Heart left ventricle (tissue), 16 donors: ENCODE measurements at regions of chr1 and their contacts with region 1.

Region 1: DNA sequence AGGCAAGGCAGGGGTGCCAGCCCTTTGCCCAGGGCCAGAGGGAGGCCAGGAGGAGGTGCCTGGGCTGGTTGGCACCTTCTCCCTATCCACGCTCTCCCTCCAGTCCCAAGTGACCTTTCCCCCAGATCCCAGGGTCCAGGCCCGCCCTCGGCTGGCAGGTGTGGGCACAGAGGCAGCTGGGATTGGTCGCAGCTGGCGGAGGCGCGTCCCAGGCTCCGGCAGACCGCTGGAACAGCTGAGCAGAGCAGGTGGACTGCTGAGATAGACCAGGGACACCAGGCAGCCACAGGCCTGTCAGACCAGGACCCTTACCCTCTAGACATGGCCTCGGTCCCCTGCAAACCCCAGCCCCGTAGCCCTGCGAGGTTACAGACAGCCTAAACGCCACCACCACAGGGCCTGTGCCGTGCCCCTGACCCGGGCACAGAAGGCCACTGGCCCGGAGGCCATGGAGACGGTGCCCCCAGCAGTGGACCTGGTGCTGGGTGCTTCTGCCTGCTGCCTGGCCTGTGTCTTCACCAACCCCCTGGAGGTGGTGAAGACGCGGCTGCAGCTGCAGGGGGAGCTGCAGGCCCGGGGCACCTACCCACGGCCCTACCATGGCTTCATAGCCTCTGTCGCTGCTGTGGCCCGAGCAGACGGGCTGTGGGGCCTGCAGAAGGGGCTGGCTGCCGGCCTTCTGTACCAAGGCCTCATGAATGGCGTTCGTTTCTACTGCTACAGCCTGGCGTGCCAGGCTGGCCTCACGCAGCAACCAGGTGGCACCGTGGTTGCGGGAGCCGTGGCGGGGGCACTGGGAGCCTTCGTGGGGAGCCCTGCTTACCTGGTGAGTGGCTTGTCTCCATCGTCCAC is at the start of gene SLC25A34:
- DNase-seq: peak; percentile 80 to 93 (median 87)
- ATAC-seq: peak; percentile 82 to 92 (median 88)
- H3K4me3 ChIP-seq: peak within 1 kb of the TSS in 10 of 12 donors; percentile 14 to 47 (median 30)
- H3K27ac ChIP-seq: peak within 1 kb of the TSS; percentile 73 to 96 (median 84)
- H3K4me1 ChIP-seq: peaks cover 0 to 41% (median 17%) of the 10 kb centered on the region in 12 donors
- H3K27me3 ChIP-seq: no peaks in the 10 kb centered on the region
- CTCF ChIP-seq: peak in 1 of 12 donors; percentile 16
- POLR2A ChIP-seq: peak in 1 of 2 donors; percentile 48
- total RNA-seq, gene SLC25A34: 4.8 to 71.2 (median 17.8) TPM

Region 2: DNA sequence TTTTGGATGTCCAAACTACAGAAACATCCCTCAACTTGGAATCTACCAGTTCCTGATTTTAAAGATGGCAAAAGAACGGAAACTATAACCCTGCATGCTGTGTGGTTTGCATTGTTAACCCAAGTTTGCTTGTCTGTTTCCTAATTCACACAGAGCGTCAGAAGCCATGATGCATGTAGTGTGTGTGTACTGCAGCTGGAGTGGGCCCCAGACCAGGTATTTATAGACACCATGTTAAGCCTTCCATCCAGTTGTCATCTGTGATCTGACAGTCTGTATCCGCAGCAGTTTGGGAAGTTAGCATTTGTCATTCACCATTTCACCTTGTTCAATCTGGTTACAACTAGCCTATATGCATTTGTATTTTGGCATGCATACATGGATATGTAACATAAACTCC is 79.8 kb before region 1 on chr1:
- intact Hi-C with region 1: loop called in 2 of 10 experiments (anchors 2 to 5 kb)
- DNase-seq: no peak
- ATAC-seq: peak; percentile 51 to 84 (median 79)
- H3K4me3 ChIP-seq: no peak overlapping the region
- H3K27ac ChIP-seq: peak overlapping the region in 3 of 12 donors; percentile 20 to 54 (median 41)
- H3K4me1 ChIP-seq: peaks cover 0 to 16% (median 3%) of the 10 kb centered on the region in 12 donors
- H3K27me3 ChIP-seq: no peaks in the 10 kb centered on the region
- CTCF ChIP-seq: peak in 3 of 12 donors; percentile 16 to 23 (median 17)
- POLR2A ChIP-seq: no peak

Region 3: DNA sequence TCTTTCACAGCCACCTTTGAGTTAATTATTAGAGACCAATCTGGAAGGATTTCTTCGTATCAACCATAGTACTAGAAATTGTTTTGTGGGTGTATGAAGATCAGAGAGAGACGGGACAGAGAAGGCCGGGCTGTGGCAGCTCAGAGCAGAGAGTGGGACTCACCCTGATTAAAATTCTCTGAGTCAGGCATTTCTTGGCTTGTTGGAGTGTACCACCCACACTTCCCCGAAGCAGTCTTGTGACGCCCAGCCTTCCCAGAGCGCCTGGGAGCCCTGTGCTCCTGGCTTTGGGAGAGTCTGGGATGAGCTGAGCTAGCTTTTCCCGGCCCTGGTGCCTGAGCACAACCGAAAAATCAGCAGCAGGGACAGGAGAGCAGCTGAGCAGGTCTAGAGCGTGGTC is 32.7 kb before region 1 on chr1:
- intact Hi-C with region 1: loop called in 1 of 10 experiments (anchors 5 kb)
- DNase-seq: peak; percentile 77 to 88 (median 81)
- ATAC-seq: peak; percentile 73 to 94 (median 94)
- H3K4me3 ChIP-seq: peak overlapping the region in 7 of 12 donors; percentile 1 to 17 (median 8)
- H3K27ac ChIP-seq: peak overlapping the region; percentile 14 to 96 (median 86)
- H3K4me1 ChIP-seq: peaks cover 7 to 84% (median 56%) of the 10 kb centered on the region in 12 donors
- H3K27me3 ChIP-seq: no peaks in the 10 kb centered on the region
- CTCF ChIP-seq: no peak
- POLR2A ChIP-seq: no peak

Region 4: DNA sequence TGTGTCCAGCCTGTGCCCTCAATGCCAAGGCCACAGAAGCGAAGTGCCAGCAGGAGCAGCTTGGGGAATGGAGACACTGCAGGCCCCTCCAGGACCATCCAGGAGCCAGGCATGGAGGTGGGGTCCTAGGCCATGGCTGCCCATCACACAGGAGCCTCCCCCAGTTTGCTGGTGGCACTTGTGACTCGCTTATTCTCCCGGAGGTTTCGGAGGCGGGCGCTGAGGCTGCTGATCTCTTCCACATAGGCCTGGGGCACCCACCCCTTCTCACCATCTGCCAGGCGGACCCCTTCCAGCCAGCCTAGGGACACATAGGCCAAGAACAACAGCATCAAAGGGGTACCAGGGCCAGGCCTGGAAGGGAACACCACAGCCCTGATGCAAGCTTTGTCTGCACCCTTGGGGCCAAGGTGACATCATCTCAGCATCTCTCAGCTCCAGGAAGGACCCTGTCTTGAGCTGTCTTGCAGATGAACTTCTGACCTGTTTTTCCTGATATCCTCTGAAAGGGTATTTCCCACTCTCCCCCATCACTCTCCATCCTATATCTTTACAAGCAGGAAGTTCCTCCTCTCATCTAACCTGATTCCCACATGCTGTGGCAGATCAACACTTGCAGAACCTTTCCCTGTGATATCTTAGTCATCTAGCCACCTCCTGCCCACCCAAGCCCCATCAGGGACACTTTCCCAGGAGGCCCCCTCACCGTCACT is 462.3 kb after region 1 on chr1:
- intact Hi-C with region 1: no loop called
- DNase-seq: no peak
- ATAC-seq: no peak
- H3K4me3 ChIP-seq: no peak overlapping the region
- H3K27ac ChIP-seq: no peak overlapping the region
- H3K4me1 ChIP-seq: no peaks in the 10 kb centered on the region
- H3K27me3 ChIP-seq: no peaks in the 10 kb centered on the region
- CTCF ChIP-seq: no peak
- POLR2A ChIP-seq: no peak